ENCODE measurements at regions of chr2 and their contacts with region 1.

Region 1: GRCh38 chr2:71226965-71227560 is at the start of gene PAIP2B:
- H3K4me3 ChIP-seq: peak within 1 kb of the TSS; percentile 61
- H3K27ac ChIP-seq: peak within 1 kb of the TSS; percentile 64
- H3K4me1 ChIP-seq: peaks cover 5% of the 10 kb centered on the region; the same call in 1 of the 2 replicates
- CTCF ChIP-seq: no peak; the same call in 1 of the 2 replicates

Region 2: GRCh38 chr2:71276311-71277146 is 49.5 kb after region 1 on chr2:
- CTCF ChIA-PET with region 1: interaction called, 7 read pairs
- POLR2A ChIA-PET with region 1: interaction called, 25 read pairs
- H3K4me3 ChIP-seq: peak overlapping the region; percentile 72
- H3K27ac ChIP-seq: peak overlapping the region; percentile 54; the same call in 1 of the 2 replicates
- H3K4me1 ChIP-seq: peaks cover 10% of the 10 kb centered on the region
- CTCF ChIP-seq: peak; percentile 55

Region 3: GRCh38 chr2:71282495-71282894 is 55.4 kb after region 1 on chr2:
- CTCF ChIA-PET with region 1: interaction called, 12 read pairs
- POLR2A ChIA-PET with region 1: interaction called, 25 read pairs
- H3K4me3 ChIP-seq: no peak overlapping the region
- H3K27ac ChIP-seq: no peak overlapping the region
- H3K4me1 ChIP-seq: peaks cover 10% of the 10 kb centered on the region
- CTCF ChIP-seq: 0 out of 2 replicates have a peak, but pooled peaks have one; percentile 54